ENCODE measurements at regions of chr5 and their contacts with region 1.

Region 1: DNA sequence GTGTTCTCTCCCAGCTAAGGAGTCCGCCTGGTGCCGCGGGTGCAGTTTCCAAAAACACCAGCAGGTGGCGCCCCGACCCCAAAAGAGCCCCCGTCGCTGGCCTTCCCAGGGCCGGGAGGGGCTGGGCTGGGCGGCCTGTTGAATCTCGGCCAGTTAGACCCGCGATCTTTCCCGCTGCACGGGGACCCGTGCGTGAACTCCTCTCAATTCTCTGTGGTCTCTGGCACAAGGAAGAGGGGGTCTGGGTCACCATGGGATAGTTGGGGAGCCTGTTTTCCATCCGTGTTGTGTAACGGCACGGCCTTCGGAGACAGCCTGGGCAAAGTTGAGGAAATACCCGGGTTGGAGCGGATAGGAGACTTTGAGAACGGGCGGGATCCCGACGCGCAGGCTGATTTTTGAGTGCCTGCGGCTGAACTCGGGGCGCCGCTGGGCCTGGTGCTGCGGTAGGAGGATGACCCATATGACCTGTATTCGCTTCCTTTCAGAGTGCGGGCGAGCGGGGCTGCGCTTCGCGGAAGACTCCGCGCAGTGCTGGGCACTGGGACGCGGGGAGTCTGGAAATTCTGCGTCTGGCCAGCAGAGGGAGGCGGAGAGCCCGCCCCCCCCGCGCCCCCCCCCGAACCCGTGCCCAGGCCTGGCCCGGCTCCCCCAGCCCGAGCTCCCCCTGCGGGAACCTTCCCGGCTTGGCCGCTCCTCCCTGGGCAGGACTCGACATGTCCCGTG is 7.9 kb upstream of the PSD2 start:
- DNase-seq: peak; percentile 89
- ATAC-seq: peak; percentile 90
- H3K4me3 Mint-ChIP-seq: peak overlapping the region; percentile 71
- H3K27ac Mint-ChIP-seq: no peak overlapping the region
- H3K4me1 Mint-ChIP-seq: no peaks in the 10 kb centered on the region
- H3K27me3 Mint-ChIP-seq: peaks cover 13% of the 10 kb centered on the region
- CTCF ChIP-seq: peak; percentile 96

Region 2: DNA sequence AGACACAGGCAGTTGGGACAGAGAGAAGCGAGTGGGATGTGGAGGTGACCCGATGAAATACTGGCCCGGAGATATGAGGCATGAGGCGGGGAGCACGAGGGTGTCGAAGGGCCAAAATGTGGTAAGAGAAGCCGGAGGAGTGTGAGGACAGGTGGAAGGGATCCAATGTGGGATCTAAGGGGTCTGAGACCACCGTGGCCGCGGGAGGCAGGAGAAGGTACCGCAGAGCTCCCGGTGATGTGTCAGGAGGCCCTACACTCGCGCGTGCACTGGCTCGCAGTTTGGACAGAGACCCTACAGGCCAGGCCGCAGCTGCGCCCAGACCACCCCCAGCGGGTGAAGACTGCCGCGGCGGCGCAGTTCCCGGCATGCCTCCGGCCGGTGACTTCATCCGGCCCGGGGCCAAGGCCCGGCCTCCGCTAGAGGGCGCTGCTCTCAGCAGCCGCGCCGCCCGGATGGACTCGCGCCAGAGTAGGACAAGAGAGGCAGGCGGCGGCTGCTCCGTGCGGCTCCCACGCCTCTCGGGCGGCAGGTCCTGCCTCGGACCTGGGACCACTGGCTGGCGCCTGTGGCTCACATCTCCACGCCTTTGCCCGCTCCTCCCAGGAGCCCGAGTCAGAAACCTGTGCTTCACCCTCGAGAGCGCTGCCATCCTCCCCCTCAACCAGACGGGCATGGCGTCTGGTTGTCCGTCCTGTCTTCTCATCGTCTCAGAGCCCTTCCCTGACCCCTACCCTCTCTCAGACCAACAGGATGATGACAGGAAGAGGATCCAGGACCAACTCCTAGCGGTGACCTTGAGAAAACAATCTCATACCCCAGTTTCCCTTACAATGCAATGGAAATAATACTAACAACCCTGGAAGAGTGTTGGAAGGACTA is 269.8 kb before region 1 on chr5:
- CTCF ChIA-PET with region 1: no interaction called
- POLR2A ChIA-PET with region 1: no interaction called
- intact Hi-C with region 1: no loop called
- DNase-seq: peak; percentile 91
- ATAC-seq: peak; percentile 92
- H3K4me3 Mint-ChIP-seq: peak overlapping the region; percentile 74
- H3K27ac Mint-ChIP-seq: peak overlapping the region; percentile 90
- H3K4me1 Mint-ChIP-seq: peaks cover 19% of the 10 kb centered on the region
- H3K27me3 Mint-ChIP-seq: peaks cover 1% of the 10 kb centered on the region
- CTCF ChIP-seq: peak; percentile 98

Region 3: GRCh38 chr5:139584137-139584536 is 203.6 kb before region 1 on chr5:
- CTCF ChIA-PET with region 1: no interaction called
- POLR2A ChIA-PET with region 1: no interaction called
- intact Hi-C with region 1: no loop called
- DNase-seq: no peak
- ATAC-seq: peak; percentile 94
- H3K4me3 Mint-ChIP-seq: no peak overlapping the region
- H3K27ac Mint-ChIP-seq: peak overlapping the region; percentile 80
- H3K4me1 Mint-ChIP-seq: peaks cover 62% of the 10 kb centered on the region
- H3K27me3 Mint-ChIP-seq: no peaks in the 10 kb centered on the region
- CTCF ChIP-seq: no peak

Region 4: DNA sequence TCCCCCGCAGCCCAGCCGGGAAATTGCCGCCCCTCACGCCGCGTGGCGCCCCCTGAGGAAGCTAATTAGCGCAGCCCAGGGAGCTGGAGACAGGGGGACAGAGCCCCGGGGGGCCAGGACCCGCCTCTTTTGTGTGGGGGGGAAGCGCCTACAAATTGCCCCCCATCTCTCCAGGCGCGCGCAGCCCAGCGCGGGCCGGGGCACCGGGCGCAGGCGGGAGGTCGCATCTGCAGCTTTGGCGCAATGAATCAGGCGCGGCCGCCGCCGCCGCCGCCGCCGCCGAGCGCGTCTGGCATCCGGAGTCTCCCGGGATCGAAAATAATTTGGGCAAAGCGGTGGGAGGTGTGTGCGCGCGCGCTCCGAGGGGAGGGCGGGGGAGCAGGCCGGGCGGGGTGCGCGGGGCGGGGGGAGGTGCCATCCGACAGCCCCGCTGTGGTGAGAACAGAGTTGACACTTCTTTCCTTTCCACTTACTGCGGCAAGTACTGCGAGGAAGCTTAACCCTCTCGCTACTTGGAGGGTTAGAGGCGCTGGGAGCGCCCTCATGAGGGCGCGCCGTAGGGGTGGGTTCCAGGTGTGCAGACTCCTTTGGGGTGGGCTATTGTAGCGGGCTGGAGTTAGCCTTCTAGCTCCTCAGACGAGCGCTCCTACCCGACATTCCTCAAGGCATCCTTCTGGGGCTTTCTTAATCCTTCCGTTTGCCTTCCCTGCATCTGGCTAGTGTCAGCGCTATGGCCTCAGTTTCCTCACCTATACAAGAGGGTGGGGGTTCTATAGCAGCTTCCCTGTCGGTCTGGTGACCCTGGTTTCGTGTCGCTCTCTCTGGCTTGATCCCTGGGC is 76.4 kb before region 1 on chr5:
- CTCF ChIA-PET with region 1: no interaction called
- POLR2A ChIA-PET with region 1: no interaction called
- intact Hi-C with region 1: no loop called
- DNase-seq: peak; percentile 79
- ATAC-seq: peak; percentile 78
- H3K4me3 Mint-ChIP-seq: peak overlapping the region; percentile 60
- H3K27ac Mint-ChIP-seq: no peak overlapping the region
- H3K4me1 Mint-ChIP-seq: peaks cover 21% of the 10 kb centered on the region
- H3K27me3 Mint-ChIP-seq: no peaks in the 10 kb centered on the region
- CTCF ChIP-seq: peak; percentile 57

Region 5: GRCh38 chr5:139765409-139766217 is 22.1 kb before region 1 on chr5:
- CTCF ChIA-PET with region 1: interaction called, 29 read pairs
- POLR2A ChIA-PET with region 1: no interaction called
- intact Hi-C with region 1: no loop called
- DNase-seq: peak; percentile 83
- ATAC-seq: peak; percentile 94
- H3K4me3 Mint-ChIP-seq: peak overlapping the region; percentile 56
- H3K27ac Mint-ChIP-seq: peak overlapping the region; percentile 59
- H3K4me1 Mint-ChIP-seq: peaks cover 12% of the 10 kb centered on the region
- H3K27me3 Mint-ChIP-seq: peaks cover 21% of the 10 kb centered on the region
- CTCF ChIP-seq: peak; percentile 100

Region 6: DNA sequence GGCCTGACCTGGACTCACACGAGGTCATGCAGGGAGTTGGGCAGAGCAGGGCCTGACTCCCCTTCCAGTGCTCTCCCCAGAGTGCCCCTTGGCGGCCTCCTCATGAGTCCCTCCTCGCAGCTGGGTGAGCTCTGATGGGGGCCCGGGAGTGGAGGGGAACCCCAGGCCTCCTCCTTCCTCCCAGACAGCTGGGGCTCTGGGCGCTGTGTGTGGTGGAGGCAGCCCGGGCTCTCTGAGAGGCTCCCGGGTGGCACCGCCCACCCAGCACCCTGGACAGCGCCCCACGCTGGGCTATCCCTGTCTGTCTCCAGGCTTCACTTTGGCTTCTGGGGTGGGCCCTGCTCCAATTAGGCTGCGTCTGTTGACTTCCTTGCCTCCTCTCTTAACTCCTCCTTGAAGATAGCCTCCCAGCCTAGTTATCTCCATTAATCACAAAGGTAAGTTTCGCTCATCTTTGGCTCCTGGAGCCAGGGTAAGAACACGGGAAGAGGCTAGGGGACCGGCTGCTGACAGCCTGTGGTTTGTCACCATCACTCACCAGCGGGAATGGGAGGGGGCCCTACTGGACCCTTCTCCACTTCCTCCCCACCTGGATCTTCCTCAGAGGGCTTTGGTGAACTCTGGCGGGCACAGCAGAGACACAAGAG is 20.9 kb after region 1 on chr5:
- CTCF ChIA-PET with region 1: interaction called, 17 read pairs
- POLR2A ChIA-PET with region 1: no interaction called
- intact Hi-C with region 1: no loop called
- DNase-seq: peak; percentile 65
- ATAC-seq: peak; percentile 92
- H3K4me3 Mint-ChIP-seq: no peak overlapping the region
- H3K27ac Mint-ChIP-seq: no peak overlapping the region
- H3K4me1 Mint-ChIP-seq: no peaks in the 10 kb centered on the region
- H3K27me3 Mint-ChIP-seq: peaks cover 8% of the 10 kb centered on the region
- CTCF ChIP-seq: no peak

Region 7: GRCh38 chr5:139856714-139857113 is 69.0 kb after region 1 on chr5:
- CTCF ChIA-PET with region 1: interaction called, 61 read pairs
- POLR2A ChIA-PET with region 1: no interaction called
- intact Hi-C with region 1: no loop called
- DNase-seq: no peak
- ATAC-seq: no peak
- H3K4me3 Mint-ChIP-seq: no peak overlapping the region
- H3K27ac Mint-ChIP-seq: no peak overlapping the region
- H3K4me1 Mint-ChIP-seq: no peaks in the 10 kb centered on the region
- H3K27me3 Mint-ChIP-seq: no peaks in the 10 kb centered on the region
- CTCF ChIP-seq: no peak

Region 8: DNA sequence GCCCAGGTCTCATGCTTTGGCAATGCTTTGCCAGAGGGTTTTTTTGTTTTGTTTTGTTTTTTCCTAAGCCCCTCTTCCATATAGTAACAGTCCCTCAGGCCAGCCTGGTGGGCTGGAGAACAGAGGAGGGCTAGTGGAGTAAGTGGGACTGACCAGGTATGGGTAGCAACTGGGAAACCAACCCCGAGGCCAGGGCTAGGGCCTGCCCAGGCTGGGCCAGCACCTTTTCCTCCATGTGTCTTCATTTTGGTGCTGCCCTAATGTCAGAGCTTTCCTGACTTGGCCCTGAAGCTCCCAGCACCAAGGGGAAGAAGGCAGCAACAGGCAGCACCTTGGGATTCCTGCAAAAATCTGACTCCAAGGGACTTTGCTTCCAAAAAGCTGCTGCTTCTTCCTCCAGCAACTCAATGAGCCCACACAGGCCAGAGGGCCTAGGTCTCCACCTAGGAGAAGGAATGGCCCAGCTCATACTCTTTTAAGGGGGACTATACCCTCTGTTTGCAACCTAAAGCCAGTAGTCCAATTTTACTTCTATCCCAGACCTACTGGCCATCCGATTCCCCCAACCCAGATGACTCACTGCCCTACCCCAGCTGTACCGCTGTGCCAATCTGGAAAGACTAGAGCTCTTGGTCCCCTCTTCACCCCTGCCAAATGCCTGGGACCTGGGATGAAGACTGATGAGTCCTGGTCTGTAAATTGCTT is 113.0 kb after region 1 on chr5:
- CTCF ChIA-PET with region 1: interaction called, 11 read pairs
- POLR2A ChIA-PET with region 1: no interaction called
- intact Hi-C with region 1: no loop called
- DNase-seq: no peak
- ATAC-seq: no peak
- H3K4me3 Mint-ChIP-seq: no peak overlapping the region
- H3K27ac Mint-ChIP-seq: no peak overlapping the region
- H3K4me1 Mint-ChIP-seq: peaks cover 5% of the 10 kb centered on the region
- H3K27me3 Mint-ChIP-seq: peaks cover 25% of the 10 kb centered on the region
- CTCF ChIP-seq: no peak

Region 9: GRCh38 chr5:140220032-140220697 is 432.4 kb after region 1 on chr5:
- CTCF ChIA-PET with region 1: no interaction called
- POLR2A ChIA-PET with region 1: no interaction called
- intact Hi-C with region 1: no loop called
- DNase-seq: no peak
- ATAC-seq: peak; percentile 52
- H3K4me3 Mint-ChIP-seq: no peak overlapping the region
- H3K27ac Mint-ChIP-seq: no peak overlapping the region
- H3K4me1 Mint-ChIP-seq: peaks cover 28% of the 10 kb centered on the region
- H3K27me3 Mint-ChIP-seq: no peaks in the 10 kb centered on the region
- CTCF ChIP-seq: no peak